Activated CD4-positive, alpha-beta T cell treated with anti-CD3 and anti-CD28 coated beads, Interleukin-2, amount 10 ng/mL, durations not matched to agents 24 days and 14 days (primary cell): ENCODE measurements at regions of chr4 and their contacts with region 1.

Region 1: GRCh38 chr4:77203380-77204197 is 46.6 kb downstream of the CCNG2 start:
- DNase-seq: peak; percentile 90
- H3K4me3 Mint-ChIP-seq: no peak overlapping the region
- H3K27ac Mint-ChIP-seq: no peak overlapping the region
- H3K4me1 Mint-ChIP-seq: peaks cover 3% of the 10 kb centered on the region
- H3K27me3 Mint-ChIP-seq: peaks cover 26% of the 10 kb centered on the region

Region 2: DNA sequence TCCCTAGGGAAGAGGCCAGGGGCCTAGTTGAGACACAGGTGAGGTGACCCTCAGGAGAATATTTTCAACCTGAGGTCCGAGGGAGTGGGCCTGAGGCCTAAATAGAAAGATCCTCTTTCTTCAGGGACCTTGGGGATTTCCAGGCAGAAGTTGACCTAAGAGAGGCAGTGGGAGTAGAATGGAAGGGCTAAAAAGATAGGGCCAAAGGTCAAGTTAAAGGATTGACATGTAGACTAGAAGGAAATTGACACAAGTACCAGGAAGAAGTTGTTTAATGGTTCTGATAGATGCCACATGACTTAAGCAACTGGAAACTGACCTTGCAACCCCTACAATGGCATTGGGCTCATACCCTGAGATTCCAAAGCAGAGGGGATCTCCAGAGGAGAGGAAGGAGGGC is 691.6 kb before region 1 on chr4:
- intact Hi-C with region 1: loop called (anchors 5 kb)
- DNase-seq: no peak
- H3K4me3 Mint-ChIP-seq: no peak overlapping the region
- H3K27ac Mint-ChIP-seq: no peak overlapping the region
- H3K4me1 Mint-ChIP-seq: no peaks in the 10 kb centered on the region
- H3K27me3 Mint-ChIP-seq: no peaks in the 10 kb centered on the region

Region 3: DNA sequence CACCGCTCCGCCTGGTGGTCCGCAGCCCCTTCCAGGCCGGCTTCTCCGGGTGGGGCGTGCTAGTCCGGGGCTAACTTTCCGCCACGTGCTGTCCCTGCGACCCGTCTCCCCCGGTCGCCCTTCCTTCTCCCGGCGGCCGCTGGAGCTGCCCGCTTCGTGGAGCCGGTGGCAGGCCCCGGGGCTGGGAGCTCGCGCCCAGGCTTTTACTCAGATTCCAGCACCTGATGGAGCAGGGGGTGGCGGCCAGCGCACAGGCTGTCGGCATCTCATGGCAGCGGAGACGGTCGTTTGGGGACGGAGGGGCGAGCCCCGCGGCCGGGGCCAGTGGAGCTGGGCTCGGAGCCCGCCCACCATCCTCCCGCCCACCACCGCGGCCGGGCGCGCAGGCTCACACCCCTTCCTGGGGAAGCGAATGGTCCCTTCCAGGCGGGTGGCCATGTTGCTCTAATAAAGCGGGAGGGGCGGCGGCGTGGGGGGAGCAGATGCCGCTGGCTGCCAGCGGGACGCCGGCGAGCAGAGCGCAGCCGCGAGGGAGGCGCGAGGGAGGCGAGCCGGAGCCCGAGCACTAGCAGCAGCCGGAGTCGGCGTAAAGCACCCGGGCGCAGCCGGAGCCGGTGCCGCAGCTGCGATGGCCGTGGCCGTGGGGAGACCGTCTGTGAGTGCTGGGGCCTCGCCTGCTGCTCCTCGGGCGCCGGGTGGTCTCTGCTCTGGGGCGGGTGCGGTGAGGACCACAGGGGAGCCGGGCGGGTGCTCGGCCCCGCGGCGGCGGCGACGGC is 254.1 kb before region 1 on chr4 and contains the start of gene SEPTIN11:
- intact Hi-C with region 1: loop called (anchors 10 kb)
- DNase-seq: peak; percentile 91
- H3K4me3 Mint-ChIP-seq: peak within 1 kb of the TSS; percentile 87
- H3K27ac Mint-ChIP-seq: peak within 1 kb of the TSS; percentile 62
- H3K4me1 Mint-ChIP-seq: peaks cover 17% of the 10 kb centered on the region
- H3K27me3 Mint-ChIP-seq: peaks cover 67% of the 10 kb centered on the region
- total RNA-seq, gene SEPTIN11: 15.4 and 17.0 TPM in 2 replicates

Region 4: DNA sequence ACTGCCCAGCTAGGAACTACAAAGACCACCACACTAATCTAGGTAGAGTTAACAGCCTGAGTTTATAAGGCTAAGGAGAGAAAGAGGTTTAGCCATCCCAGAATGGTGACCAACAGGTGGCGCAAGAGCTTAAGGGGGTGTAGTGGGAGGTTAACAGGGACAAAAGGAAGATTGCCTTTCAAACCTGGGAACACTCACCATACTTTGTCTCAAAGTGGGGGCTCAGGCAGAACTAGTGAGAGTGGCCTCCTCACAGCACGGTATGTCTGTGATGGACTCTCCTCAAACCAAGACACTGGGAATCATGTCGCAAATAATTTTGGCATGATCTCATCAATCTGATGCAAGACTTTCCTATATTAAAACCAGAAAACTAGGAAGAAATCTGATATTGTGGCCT is 151.2 kb before region 1 on chr4:
- intact Hi-C with region 1: loop called (anchors 2 kb)
- DNase-seq: peak; percentile 87
- H3K4me3 Mint-ChIP-seq: no peak overlapping the region
- H3K27ac Mint-ChIP-seq: no peak overlapping the region
- H3K4me1 Mint-ChIP-seq: peaks cover 3% of the 10 kb centered on the region
- H3K27me3 Mint-ChIP-seq: no peaks in the 10 kb centered on the region

Region 5: GRCh38 chr4:77095101-77095821 is 108.3 kb before region 1 on chr4:
- intact Hi-C with region 1: loop called (anchors 1 kb)
- DNase-seq: peak; percentile 90
- H3K4me3 Mint-ChIP-seq: no peak overlapping the region
- H3K27ac Mint-ChIP-seq: no peak overlapping the region
- H3K4me1 Mint-ChIP-seq: peaks cover 11% of the 10 kb centered on the region
- H3K27me3 Mint-ChIP-seq: no peaks in the 10 kb centered on the region

Region 6: DNA sequence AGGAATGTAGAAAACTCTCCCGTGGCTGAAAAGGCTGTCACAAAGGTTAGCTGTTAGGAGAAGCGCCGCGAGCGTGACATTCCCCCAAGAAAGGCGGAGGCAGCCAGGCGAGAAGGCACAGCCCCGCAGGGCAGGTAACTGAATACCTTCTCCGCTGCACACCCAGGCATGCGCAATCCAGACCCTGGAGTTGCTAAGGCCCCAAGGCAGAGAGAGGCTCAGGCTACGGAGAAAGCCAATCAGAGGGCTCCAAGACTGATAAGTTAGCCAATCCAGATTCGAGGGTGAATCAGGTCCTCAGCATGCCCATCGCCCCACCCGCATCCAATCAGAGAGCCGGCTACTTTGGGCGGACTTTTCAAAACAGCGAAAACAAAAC is 47.1 kb before region 1 on chr4:
- intact Hi-C with region 1: loop called (anchors 2 kb)
- DNase-seq: peak; percentile 99
- H3K4me3 Mint-ChIP-seq: peak overlapping the region; percentile 100
- H3K27ac Mint-ChIP-seq: peak overlapping the region; percentile 99
- H3K4me1 Mint-ChIP-seq: peaks cover 34% of the 10 kb centered on the region
- H3K27me3 Mint-ChIP-seq: peaks cover 3% of the 10 kb centered on the region

Region 7: DNA sequence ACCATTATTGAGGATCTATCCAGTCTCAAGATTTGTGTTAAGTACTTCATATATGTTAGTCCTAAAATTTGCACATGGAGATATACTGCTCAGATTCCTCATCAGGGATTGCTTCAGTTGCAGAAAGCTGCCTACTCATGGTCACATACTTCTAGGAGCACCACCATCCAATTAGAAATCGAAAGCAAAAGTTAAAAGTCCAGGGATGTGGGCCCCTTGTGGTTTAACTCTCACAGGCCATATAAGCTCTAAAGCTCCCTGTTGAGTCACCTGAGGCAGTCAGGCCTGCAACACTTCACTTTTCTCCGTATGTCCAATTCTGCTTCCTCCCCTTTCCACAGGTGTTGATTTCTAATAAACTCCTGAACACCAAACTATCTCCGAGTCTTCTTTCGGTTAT is 531.3 kb after region 1 on chr4:
- intact Hi-C with region 1: no loop called
- DNase-seq: peak; percentile 85
- H3K4me3 Mint-ChIP-seq: peak overlapping the region; percentile 79
- H3K27ac Mint-ChIP-seq: peak overlapping the region; percentile 79
- H3K4me1 Mint-ChIP-seq: peaks cover 55% of the 10 kb centered on the region
- H3K27me3 Mint-ChIP-seq: no peaks in the 10 kb centered on the region

Region 8: GRCh38 chr4:77782102-77782835 is 578.7 kb after region 1 on chr4:
- intact Hi-C with region 1: no loop called
- DNase-seq: no peak
- H3K4me3 Mint-ChIP-seq: no peak overlapping the region
- H3K27ac Mint-ChIP-seq: no peak overlapping the region
- H3K4me1 Mint-ChIP-seq: peaks cover 35% of the 10 kb centered on the region
- H3K27me3 Mint-ChIP-seq: no peaks in the 10 kb centered on the region